HEK293 (cell line): ENCODE measurements at regions of chr17 and their contacts with region 1.

Region 1: GRCh38 chr17:47663912-47664625 is 14.3 kb downstream of the KPNB1 start:
- H3K4me3 ChIP-seq: no peak overlapping the region
- H3K27ac ChIP-seq: no peak overlapping the region
- H3K4me1 ChIP-seq: no peaks in the 10 kb centered on the region
- CTCF ChIP-seq: peak; percentile 60

Region 2: GRCh38 chr17:47675380-47676198 is 11.5 kb after region 1 on chr17:
- CTCF ChIA-PET with region 1: interaction called, 107 read pairs
- POLR2A ChIA-PET with region 1: interaction called, 8 read pairs
- H3K4me3 ChIP-seq: no peak overlapping the region
- H3K27ac ChIP-seq: no peak overlapping the region
- H3K4me1 ChIP-seq: no peaks in the 10 kb centered on the region
- CTCF ChIP-seq: no peak

Region 3: GRCh38 chr17:47687748-47688147 is 23.7 kb after region 1 on chr17:
- CTCF ChIA-PET with region 1: interaction called, 20 read pairs
- POLR2A ChIA-PET with region 1: interaction called, 4 read pairs
- H3K4me3 ChIP-seq: no peak overlapping the region
- H3K27ac ChIP-seq: no peak overlapping the region
- H3K4me1 ChIP-seq: peaks cover 3% of the 10 kb centered on the region; the same call in 1 of the 2 replicates
- CTCF ChIP-seq: no peak

Region 4: DNA sequence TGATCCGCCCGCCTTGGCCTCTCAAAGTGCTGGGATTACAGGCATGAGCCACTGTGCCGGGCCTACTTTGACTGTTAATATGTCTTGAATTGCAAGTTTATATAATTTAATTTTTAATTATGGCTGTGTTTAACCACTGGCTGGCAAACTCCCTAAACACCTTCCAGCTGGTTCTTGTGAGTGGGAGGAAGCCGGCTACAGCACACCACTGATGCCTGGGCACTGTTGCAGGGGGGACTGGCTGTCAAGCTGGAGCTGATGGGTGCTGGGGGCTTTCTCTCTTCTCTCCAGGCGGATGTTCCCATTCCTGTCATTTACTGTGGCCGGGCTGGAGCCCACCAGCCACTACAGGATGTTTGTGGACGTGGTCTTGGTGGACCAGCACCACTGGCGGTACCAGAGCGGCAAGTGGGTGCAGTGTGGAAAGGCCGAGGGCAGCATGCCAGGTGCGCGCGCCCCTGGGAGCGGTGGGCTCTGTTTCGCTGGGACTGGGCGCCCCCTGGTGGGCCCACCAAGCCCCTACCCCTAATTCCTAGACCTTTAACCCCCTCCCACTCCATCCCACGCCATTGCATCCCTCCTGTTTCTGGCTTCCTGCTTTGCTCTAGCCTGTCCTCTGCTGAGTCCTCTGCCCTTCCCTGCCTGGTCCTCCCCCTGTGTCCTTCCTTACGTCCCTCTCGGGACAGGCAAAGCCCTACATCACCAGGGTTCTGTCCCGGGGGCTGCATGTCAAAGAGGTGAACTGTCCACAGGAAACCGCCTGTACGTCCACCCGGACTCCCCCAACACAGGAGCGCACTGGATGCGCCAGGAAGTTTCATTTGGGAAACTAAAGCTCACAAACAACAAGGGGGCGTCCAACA is 78.5 kb after region 1 on chr17:
- CTCF ChIA-PET with region 1: interaction called, 22 read pairs
- POLR2A ChIA-PET with region 1: no interaction called
- H3K4me3 ChIP-seq: no peak overlapping the region
- H3K27ac ChIP-seq: no peak overlapping the region
- H3K4me1 ChIP-seq: no peaks in the 10 kb centered on the region
- CTCF ChIP-seq: peak; percentile 40; the same call in 1 of the 2 replicates